ENCODE measurements at regions of chr13 and their contacts with region 1.

Region 1: GRCh38 chr13:25977216-25977615 is 74.6 kb downstream of the SHISA2 start:
- DNase-seq: no peak
- ATAC-seq: no peak
- H3K4me3 ChIP-seq: no peak overlapping the region
- H3K27ac ChIP-seq: no peak overlapping the region
- H3K4me1 ChIP-seq: peaks cover 19% of the 10 kb centered on the region
- H3K27me3 ChIP-seq: no peaks in the 10 kb centered on the region
- CTCF ChIP-seq: no peak

Region 2: GRCh38 chr13:25886438-25887214 is 90.6 kb before region 1 on chr13:
- intact Hi-C with region 1: loop called in 1 of 2 experiments (anchors 10 kb)
- DNase-seq: no peak
- ATAC-seq: peak in 1 of 4 donors; percentile 73
- H3K4me3 ChIP-seq: no peak overlapping the region
- H3K27ac ChIP-seq: no peak overlapping the region
- H3K4me1 ChIP-seq: no peaks in the 10 kb centered on the region
- H3K27me3 ChIP-seq: no peaks in the 10 kb centered on the region
- CTCF ChIP-seq: no peak

Region 3: DNA sequence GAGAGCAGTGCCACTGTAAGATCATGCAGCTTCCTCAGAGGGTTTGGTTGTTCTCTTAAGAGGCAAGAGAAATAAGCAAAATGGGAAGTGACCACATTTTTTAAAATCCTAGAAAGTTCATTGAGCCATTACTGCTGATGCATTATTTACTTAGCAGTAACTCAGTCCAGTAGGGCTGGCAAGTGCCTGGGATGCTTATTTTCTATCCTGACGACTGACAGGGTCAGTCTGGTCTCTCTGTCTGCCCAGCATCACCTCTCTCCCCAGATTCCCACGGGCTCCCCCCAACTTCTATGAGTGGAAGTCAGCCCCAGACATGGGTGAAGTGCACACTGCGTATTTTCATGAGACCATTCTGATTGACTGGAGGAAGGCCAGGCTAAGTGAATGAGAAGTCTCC is 64.2 kb after region 1 on chr13:
- intact Hi-C with region 1: no loop called
- DNase-seq: no peak
- ATAC-seq: no peak
- H3K4me3 ChIP-seq: no peak overlapping the region
- H3K27ac ChIP-seq: no peak overlapping the region
- H3K4me1 ChIP-seq: no peaks in the 10 kb centered on the region
- H3K27me3 ChIP-seq: no peaks in the 10 kb centered on the region
- CTCF ChIP-seq: no peak

Region 4: DNA sequence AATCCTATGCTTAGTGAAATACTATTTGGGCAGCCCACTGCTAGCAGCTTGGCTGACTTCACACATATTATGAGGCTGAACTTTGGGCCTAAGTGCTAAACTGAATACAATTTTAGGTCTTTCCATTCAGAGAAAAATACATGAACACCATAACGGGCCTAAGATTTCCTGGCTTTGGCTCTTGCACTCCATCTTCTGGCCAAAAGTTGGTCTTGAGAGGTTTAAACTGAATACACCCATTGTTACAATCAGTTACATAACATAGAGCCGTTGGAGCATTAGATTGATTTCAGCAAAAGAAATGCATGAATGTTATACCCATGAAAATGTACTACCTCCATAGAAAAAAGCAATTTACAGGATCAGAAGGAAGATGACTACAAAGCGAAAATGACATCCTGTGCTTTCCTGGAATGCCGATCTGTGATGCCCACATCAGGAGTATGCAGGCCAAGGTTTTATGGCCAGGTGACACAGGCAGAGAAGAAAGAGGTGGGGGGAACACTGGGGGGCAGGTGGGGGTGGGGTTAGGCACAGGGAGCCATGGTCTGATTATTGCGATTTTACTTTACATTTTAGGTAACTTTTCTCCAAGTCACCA is 85.7 kb after region 1 on chr13:
- intact Hi-C with region 1: loop called in 1 of 2 experiments (anchors 5 kb)
- DNase-seq: no peak
- ATAC-seq: peak; percentile 61 to 89 (median 74)
- H3K4me3 ChIP-seq: no peak overlapping the region
- H3K27ac ChIP-seq: no peak overlapping the region
- H3K4me1 ChIP-seq: peaks cover 5% of the 10 kb centered on the region
- H3K27me3 ChIP-seq: no peaks in the 10 kb centered on the region
- CTCF ChIP-seq: peak; percentile 72

Region 5: DNA sequence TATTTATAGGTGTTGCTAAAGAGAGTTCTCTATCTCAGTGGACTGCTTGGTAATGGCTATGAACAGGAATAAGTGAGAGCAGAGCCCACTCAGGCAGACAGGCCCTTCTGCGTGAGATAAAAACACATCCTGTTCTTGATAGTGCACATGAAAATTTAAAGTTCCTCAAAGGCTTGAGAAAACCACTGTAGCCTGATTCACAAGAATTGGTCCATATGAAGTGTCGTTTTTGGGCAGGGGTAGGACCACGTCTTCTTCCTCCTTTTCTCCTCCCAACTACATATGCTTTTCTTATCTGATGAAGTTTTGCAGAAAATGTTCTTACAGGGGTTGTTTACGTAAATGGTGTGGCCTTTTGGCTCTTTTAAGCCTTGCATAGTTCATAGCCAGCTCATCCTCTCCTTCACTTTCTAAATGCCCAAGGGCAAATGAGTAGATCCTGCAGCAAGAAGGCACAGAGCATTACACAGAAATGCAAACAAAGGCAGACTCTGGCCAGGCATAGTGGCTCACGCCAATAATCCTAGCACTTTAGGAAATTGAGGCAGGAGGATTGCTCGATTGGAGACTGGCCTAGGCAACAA is 191.1 kb after region 1 on chr13:
- intact Hi-C with region 1: no loop called
- DNase-seq: no peak
- ATAC-seq: no peak
- H3K4me3 ChIP-seq: no peak overlapping the region
- H3K27ac ChIP-seq: no peak overlapping the region
- H3K4me1 ChIP-seq: no peaks in the 10 kb centered on the region
- H3K27me3 ChIP-seq: no peaks in the 10 kb centered on the region
- CTCF ChIP-seq: no peak